Posterior vena cava (tissue), 2 donors: ENCODE measurements at regions of chr19 and their contacts with region 1.

Region 1: GRCh38 chr19:21655540-21656126 is 111.7 kb downstream of the ZNF100 start:
- DNase-seq: no peak

Region 2: GRCh38 chr19:21626924-21627697 is 28.5 kb before region 1 on chr19:
- intact Hi-C with region 1: no loop called
- DNase-seq: no peak

Region 3: DNA sequence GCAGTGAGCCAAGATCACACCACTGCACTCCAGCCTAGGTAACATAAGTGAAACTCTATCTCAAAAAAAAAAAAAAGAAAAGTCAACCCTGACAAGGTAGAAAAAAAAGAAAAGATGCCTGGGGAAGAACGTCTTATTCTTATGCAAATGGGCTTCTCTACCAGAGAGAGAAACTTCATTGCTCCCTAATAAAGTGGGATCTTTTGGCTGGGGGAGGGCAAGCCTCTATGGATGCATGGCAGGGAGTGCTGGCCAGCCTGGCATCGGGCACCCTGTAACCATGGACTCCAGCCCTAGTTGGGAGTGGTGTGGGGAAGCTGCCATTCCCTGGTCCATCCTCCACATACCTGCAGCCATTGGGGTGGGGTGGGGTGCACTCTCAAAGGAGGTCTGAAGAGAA is 1378.1 kb after region 1 on chr19:
- intact Hi-C with region 1: loop called in 1 of 2 experiments (anchors 5 kb)
- DNase-seq: no peak